ENCODE measurements at regions of chr2 and their contacts with region 1.

Region 1: DNA sequence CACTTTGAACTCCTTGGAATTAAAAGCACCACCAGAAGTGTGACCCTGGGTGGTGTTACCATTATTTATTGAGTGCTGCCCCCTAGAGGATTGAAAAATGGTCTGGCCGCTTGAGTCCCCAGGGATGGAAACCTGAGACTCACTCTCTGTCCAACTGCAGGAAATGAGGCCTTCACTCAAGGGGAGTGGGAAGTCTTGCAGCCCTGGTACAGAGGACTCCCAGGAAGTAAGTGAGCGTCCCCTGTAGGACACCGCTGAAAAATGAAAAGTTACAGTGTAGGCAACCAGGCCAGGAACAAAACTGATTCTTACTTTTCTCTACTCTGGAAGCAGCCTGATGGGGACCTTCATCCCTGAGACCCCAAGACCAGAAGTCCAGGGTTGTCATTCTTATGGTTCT is 2.2 kb upstream of the NRP2 start:
- DNase-seq: peak; percentile 92
- ATAC-seq: peak; percentile 21
- H3K4me3 ChIP-seq: no peak overlapping the region
- H3K27ac ChIP-seq: no peak overlapping the region
- H3K4me1 ChIP-seq: peaks cover 4% of the 10 kb centered on the region
- H3K27me3 ChIP-seq: no peaks in the 10 kb centered on the region
- CTCF ChIP-seq: peak; percentile 76
- POLR2A ChIP-seq: no peak
- RAD21 ChIP-seq: peak; percentile 69

Region 2: GRCh38 chr2:204325468-204325867 is 1354.6 kb before region 1 on chr2:
- CTCF ChIA-PET with region 1: interaction called, 3 read pairs
- POLR2A ChIA-PET with region 1: interaction called, 3 read pairs
- dilution Hi-C with region 1: no loop called
- in situ Hi-C with region 1: loop called (anchors 5 kb)
- intact Hi-C with region 1: loop called (anchors 2 kb)
- DNase-seq: peak; percentile 87
- ATAC-seq: peak; percentile 92
- H3K4me3 ChIP-seq: no peak overlapping the region
- H3K27ac ChIP-seq: no peak overlapping the region
- H3K4me1 ChIP-seq: peaks cover 3% of the 10 kb centered on the region
- H3K27me3 ChIP-seq: no peaks in the 10 kb centered on the region
- CTCF ChIP-seq: peak; percentile 88
- POLR2A ChIP-seq: 0 out of 2 replicates have a peak, but pooled peaks have one; percentile 38
- RAD21 ChIP-seq: peak; percentile 96

Region 3: DNA sequence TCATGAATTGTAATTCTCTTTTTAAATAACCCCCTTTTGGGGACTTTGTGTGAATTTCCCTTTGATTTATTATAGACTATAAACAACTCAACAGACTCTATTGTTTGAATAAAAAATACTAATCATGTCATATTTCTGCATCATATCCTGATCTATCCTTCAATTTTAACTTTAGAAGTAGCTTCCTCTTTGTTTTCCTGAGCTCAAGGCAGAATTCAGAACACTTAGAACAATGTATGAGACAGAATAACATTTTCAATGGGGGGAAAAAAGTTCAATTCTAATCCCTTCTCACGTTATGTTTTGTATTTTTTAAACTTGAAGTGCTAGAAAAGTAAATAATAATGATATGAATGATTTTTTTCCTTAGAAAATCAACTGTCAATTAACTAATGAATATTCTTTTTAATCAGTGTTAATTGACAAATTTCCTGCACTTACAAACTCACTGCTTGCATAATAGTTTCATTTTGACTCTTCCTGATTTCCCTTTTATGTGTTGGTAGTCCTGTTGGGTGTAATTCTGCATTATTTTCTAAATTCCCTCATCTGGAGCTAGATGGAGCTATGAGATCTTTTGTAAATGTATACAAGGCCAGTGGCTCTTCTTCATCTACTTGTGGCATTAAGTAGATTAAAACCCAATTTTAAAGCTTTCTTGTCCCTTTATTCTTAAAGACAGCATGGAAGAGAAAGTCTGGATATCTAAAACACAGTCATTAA is 808.7 kb before region 1 on chr2:
- CTCF ChIA-PET with region 1: interaction called, 9 read pairs
- POLR2A ChIA-PET with region 1: no interaction called
- dilution Hi-C with region 1: no loop called
- in situ Hi-C with region 1: loop called (anchors 5 kb)
- intact Hi-C with region 1: loop called (anchors 2 kb)
- DNase-seq: peak; percentile 69
- ATAC-seq: peak; percentile 64; the same call in 1 of the 2 replicates
- H3K4me3 ChIP-seq: no peak overlapping the region
- H3K27ac ChIP-seq: no peak overlapping the region
- H3K4me1 ChIP-seq: peaks cover 4% of the 10 kb centered on the region
- H3K27me3 ChIP-seq: no peaks in the 10 kb centered on the region
- CTCF ChIP-seq: peak; percentile 61
- POLR2A ChIP-seq: no peak
- RAD21 ChIP-seq: peak; percentile 65

Region 4: DNA sequence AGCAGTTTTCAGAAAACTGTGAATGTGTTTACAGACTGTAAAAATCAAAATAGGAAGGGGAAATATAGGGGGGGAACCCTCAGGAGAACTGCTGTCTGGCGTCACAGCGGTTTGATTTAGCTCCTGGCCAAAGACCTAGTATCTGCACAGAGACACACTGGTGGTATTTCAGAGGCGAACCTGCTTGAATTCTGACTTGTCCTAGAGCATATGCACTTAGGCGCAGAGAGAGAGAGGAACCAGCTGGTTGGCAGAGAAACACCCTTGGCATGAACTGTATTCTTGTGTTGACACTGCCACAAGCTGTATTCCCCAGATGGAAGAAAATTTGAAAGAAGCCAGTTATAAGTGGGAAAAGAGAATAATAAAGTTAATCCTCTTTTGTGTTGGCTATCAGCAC is 504.2 kb before region 1 on chr2:
- CTCF ChIA-PET with region 1: no interaction called
- POLR2A ChIA-PET with region 1: no interaction called
- dilution Hi-C with region 1: no loop called
- in situ Hi-C with region 1: no loop called
- intact Hi-C with region 1: loop called (anchors 5 kb)
- DNase-seq: no peak
- ATAC-seq: no peak
- H3K4me3 ChIP-seq: no peak overlapping the region
- H3K27ac ChIP-seq: no peak overlapping the region
- H3K4me1 ChIP-seq: peaks cover under 1% of the 10 kb centered on the region
- H3K27me3 ChIP-seq: no peaks in the 10 kb centered on the region
- CTCF ChIP-seq: no peak
- POLR2A ChIP-seq: no peak
- RAD21 ChIP-seq: no peak

Region 5: DNA sequence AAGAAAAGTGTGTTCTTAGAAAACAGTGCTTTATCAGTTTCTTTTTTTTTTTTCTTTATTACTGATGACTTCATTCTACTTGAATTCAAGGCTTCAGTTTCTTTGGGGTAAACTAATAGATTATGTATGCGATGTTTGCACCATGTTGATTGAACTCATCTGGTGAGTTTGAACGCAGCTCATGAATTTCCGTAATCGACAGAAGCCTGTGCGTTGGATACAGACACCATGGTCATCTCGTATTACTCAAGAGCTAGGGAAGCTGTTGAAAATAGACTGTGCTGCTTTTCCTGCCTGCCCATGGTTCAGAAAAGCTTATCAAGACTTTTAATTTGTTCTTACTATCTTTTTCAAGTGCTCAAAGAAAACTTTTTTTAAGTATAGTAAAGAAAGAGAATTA is 183.3 kb before region 1 on chr2:
- CTCF ChIA-PET with region 1: interaction called, 4 read pairs
- POLR2A ChIA-PET with region 1: no interaction called
- dilution Hi-C with region 1: no loop called
- in situ Hi-C with region 1: no loop called
- intact Hi-C with region 1: loop called (anchors 5 kb)
- DNase-seq: peak; percentile 98
- ATAC-seq: peak; percentile 89
- H3K4me3 ChIP-seq: no peak overlapping the region
- H3K27ac ChIP-seq: peak overlapping the region; percentile 100; the same call in 1 of the 2 replicates
- H3K4me1 ChIP-seq: peaks cover 12% of the 10 kb centered on the region
- H3K27me3 ChIP-seq: no peaks in the 10 kb centered on the region
- CTCF ChIP-seq: no peak
- POLR2A ChIP-seq: no peak
- RAD21 ChIP-seq: no peak

Region 6: GRCh38 chr2:205925373-205926337 is 245.6 kb after region 1 on chr2:
- CTCF ChIA-PET with region 1: interaction called, 3 read pairs
- POLR2A ChIA-PET with region 1: no interaction called
- dilution Hi-C with region 1: no loop called
- in situ Hi-C with region 1: loop called (anchors 10 kb)
- intact Hi-C with region 1: loop called (anchors 2 kb)
- DNase-seq: peak; percentile 51
- ATAC-seq: peak; percentile 97
- H3K4me3 ChIP-seq: peak overlapping the region; percentile 12; the same call in 1 of the 2 replicates
- H3K27ac ChIP-seq: no peak overlapping the region
- H3K4me1 ChIP-seq: no peaks in the 10 kb centered on the region; the same call in 1 of the 2 replicates
- H3K27me3 ChIP-seq: peaks cover 42% of the 10 kb centered on the region
- CTCF ChIP-seq: peak; percentile 91
- POLR2A ChIP-seq: no peak
- RAD21 ChIP-seq: peak; percentile 93